Activated CD8-positive, alpha-beta memory T cell treated with anti-CD3 and anti-CD28 coated beads, Interleukin-2, amount 10 ng/mL, durations not matched to agents 7 days and 5 days (primary cell): ENCODE measurements at regions of chr20 and their contacts with region 1.

Region 1: GRCh38 chr20:31572701-31573554 is 32.2 kb upstream of the ID1 start:
- DNase-seq: peak; percentile 91
- ATAC-seq: peak; percentile 94
- H3K4me3 Mint-ChIP-seq: peak overlapping the region; percentile 80
- H3K27ac Mint-ChIP-seq: peak overlapping the region; percentile 81
- H3K4me1 Mint-ChIP-seq: peaks cover 19% of the 10 kb centered on the region
- H3K27me3 Mint-ChIP-seq: peaks cover 12% of the 10 kb centered on the region

Region 2: GRCh38 chr20:31368301-31368700 is 204.6 kb before region 1 on chr20 and contains the start of gene DEFB118:
- CTCF ChIA-PET with region 1: no interaction called
- DNase-seq: no peak
- ATAC-seq: no peak
- H3K4me3 Mint-ChIP-seq: no peak within 1 kb of the TSS
- H3K27ac Mint-ChIP-seq: no peak within 1 kb of the TSS
- H3K4me1 Mint-ChIP-seq: no peaks in the 10 kb centered on the region
- H3K27me3 Mint-ChIP-seq: no peaks in the 10 kb centered on the region
- total RNA-seq, gene DEFB118: not detected

Region 3: GRCh38 chr20:31537890-31538289 is 35.0 kb before region 1 on chr20:
- CTCF ChIA-PET with region 1: interaction called, 11 read pairs
- DNase-seq: no peak
- ATAC-seq: no peak
- H3K4me3 Mint-ChIP-seq: no peak overlapping the region
- H3K27ac Mint-ChIP-seq: peak overlapping the region; percentile 53
- H3K4me1 Mint-ChIP-seq: peaks cover 61% of the 10 kb centered on the region
- H3K27me3 Mint-ChIP-seq: no peaks in the 10 kb centered on the region

Region 4: DNA sequence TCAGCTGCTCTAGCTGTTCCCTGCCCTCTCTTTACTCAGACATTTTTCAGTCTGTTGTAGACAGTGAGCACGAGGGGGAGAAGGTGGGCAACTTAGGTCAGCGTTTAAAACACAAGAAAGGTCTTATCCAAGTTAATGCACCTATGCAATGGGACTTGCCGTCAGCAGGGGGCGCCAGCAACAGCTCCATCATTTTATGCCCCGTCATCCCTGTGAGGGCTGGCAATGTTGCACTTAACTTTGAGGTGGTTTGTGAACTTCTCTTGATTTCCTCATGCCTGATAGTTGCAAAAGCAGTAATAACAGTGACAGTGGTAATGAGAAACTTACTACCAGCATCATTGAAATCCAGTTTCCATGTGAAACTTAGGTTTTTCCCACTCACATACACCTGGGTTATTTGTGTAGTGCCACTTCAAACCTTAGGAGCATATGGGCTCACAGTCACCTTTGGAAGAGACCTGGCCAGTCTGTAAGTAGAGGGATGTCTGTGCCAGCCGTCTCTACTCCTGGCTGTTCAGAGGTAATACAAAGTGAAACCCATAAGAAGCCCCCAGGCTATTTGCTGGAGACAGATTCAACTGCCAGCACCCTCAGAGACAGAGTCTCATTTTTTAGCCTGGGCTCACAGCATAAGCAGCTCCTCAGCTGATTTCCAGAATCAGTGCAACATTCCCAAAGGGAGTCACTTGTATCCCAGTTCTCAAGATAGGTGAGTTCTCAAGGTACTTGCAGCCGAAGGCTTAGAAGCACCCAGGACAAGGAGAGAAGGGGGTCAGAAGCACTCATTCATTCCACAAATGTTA is 12.6 kb before region 1 on chr20:
- CTCF ChIA-PET with region 1: interaction called, 134 read pairs
- DNase-seq: peak; percentile 83
- ATAC-seq: peak; percentile 71
- H3K4me3 Mint-ChIP-seq: no peak overlapping the region
- H3K27ac Mint-ChIP-seq: peak overlapping the region; percentile 82
- H3K4me1 Mint-ChIP-seq: peaks cover 17% of the 10 kb centered on the region
- H3K27me3 Mint-ChIP-seq: no peaks in the 10 kb centered on the region

Region 5: DNA sequence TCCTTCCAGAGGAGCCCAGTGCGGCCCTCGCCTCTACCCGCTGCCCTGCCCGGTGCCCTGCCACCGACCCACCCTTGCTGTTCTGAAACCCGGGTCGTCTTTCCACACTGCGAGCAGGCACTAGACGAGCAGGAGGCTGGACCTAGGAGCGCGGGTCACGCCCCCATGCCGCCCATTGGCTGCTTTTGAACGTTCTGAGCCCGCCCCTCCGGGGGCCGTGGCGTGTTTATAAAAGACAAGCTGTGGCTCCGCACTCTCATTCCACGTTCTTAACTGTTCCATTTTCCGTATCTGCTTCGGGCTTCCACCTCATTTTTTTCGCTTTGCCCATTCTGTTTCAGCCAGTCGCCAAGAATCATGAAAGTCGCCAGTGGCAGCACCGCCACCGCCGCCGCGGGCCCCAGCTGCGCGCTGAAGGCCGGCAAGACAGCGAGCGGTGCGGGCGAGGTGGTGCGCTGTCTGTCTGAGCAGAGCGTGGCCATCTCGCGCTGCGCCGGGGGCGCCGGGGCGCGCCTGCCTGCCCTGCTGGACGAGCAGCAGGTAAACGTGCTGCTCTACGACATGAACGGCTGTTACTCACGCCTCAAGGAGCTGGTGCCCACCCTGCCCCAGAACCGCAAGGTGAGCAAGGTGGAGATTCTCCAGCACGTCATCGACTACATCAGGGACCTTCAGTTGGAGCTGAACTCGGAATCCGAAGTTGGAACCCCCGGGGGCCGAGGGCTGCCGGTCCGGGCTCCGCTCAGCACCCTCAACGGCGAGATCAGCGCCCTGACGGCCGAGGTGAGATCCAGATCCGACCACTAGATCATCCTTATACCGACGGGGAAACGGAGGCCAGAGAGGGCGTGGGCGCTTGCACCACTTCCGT is 32.3 kb after region 1 on chr20 and contains the start of gene ID1:
- CTCF ChIA-PET with region 1: interaction called, 1,101 read pairs
- DNase-seq: peak; percentile 89
- ATAC-seq: peak; percentile 89
- H3K4me3 Mint-ChIP-seq: peak within 1 kb of the TSS; percentile 78
- H3K27ac Mint-ChIP-seq: peak within 1 kb of the TSS; percentile 47
- H3K4me1 Mint-ChIP-seq: peaks cover 30% of the 10 kb centered on the region
- H3K27me3 Mint-ChIP-seq: peaks cover 75% of the 10 kb centered on the region
- total RNA-seq, gene ID1: not detected